H1 (cell line): ENCODE measurements at regions of chr19 and their contacts with region 1.

Region 1: GRCh38 chr19:45079063-45079910 is at the start of gene GEMIN7:
- DNase-seq: peak in 1 of 2 experiments; percentile 92
- H3K4me3 ChIP-seq: peak within 1 kb of the TSS; percentile 87 to 98 (median 94)
- H3K27ac ChIP-seq: peak within 1 kb of the TSS; percentile 94
- H3K4me1 ChIP-seq: peaks cover 13 to 37% (median 20%) of the 10 kb centered on the region in 4 experiments
- H3K27me3 ChIP-seq: no peaks in the 10 kb centered on the region
- CTCF ChIP-seq: peak in 2 of 3 experiments; percentile 6 to 34; a peak in 3 of 4 replicates
- EP300 ChIP-seq: peak in 1 of 2 experiments; percentile 93; a peak in 1 of 3 replicates
- POLR2A ChIP-seq: peak in 1 of 2 experiments; percentile 51; a peak in 1 of 3 replicates
- RAD21 ChIP-seq: no peak; a peak in 1 of 4 replicates
- total RNA-seq, gene GEMIN7: 48.0 and 48.5 TPM in 2 replicates

Region 2: DNA sequence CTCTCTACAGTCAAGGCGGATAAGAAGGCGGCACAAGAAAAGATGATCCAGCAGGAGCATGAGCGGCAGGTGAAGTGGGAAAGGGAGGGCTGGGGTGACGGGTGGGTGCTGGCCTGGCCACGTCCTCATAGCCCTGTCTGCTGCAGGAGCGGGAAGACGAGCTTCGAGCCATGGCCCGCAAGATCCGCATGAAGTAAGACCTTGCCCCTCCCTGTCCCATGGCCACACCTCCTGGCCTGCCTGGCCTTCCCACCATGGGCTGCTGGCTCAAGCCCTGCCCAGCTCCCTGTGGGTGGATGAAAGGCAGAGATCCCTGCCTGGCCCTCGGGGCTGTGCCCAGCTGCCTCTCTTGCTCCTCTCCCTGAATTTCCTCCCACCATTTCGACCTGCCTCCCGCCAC is 10.2 kb before region 1 on chr19:
- CTCF ChIA-PET with region 1: interaction called, 3 read pairs
- POLR2A ChIA-PET with region 1: interaction called, 61 read pairs
- DNase-seq: no peak
- H3K4me3 ChIP-seq: no peak overlapping the region
- H3K27ac ChIP-seq: peak overlapping the region; percentile 10; the same call in 1 of the 2 replicates
- H3K4me1 ChIP-seq: no peaks in the 10 kb centered on the region
- H3K27me3 ChIP-seq: no peaks in the 10 kb centered on the region
- CTCF ChIP-seq: no peak
- EP300 ChIP-seq: no peak
- POLR2A ChIP-seq: no peak
- RAD21 ChIP-seq: no peak

Region 3: DNA sequence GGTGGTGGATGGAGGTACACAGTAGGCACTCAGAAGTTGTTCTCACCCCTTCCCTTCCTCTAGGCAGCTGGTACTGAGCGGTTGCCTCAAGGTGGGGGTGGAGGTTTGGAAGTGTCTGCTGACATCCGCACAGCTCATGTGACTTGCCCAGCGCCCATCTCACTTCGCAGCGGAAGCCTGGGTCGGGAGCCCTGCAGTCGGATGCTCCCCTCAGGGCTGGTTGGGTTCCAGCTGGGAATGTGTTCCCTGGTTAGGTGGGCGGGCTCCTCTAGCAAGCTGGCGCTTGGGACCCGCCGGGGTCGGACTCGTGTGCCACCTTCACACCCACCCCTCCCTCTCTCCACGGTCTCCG is 23.8 kb after region 1 on chr19:
- CTCF ChIA-PET with region 1: interaction called, 3 read pairs
- POLR2A ChIA-PET with region 1: interaction called, 26 read pairs
- DNase-seq: no peak
- H3K4me3 ChIP-seq: no peak overlapping the region
- H3K27ac ChIP-seq: no peak overlapping the region
- H3K4me1 ChIP-seq: peaks cover 0 to 28% (median 11%) of the 10 kb centered on the region in 4 experiments; a peak in 6 of 7 replicates
- H3K27me3 ChIP-seq: no peaks in the 10 kb centered on the region
- CTCF ChIP-seq: no peak
- EP300 ChIP-seq: no peak
- POLR2A ChIP-seq: no peak
- RAD21 ChIP-seq: no peak

Region 4: DNA sequence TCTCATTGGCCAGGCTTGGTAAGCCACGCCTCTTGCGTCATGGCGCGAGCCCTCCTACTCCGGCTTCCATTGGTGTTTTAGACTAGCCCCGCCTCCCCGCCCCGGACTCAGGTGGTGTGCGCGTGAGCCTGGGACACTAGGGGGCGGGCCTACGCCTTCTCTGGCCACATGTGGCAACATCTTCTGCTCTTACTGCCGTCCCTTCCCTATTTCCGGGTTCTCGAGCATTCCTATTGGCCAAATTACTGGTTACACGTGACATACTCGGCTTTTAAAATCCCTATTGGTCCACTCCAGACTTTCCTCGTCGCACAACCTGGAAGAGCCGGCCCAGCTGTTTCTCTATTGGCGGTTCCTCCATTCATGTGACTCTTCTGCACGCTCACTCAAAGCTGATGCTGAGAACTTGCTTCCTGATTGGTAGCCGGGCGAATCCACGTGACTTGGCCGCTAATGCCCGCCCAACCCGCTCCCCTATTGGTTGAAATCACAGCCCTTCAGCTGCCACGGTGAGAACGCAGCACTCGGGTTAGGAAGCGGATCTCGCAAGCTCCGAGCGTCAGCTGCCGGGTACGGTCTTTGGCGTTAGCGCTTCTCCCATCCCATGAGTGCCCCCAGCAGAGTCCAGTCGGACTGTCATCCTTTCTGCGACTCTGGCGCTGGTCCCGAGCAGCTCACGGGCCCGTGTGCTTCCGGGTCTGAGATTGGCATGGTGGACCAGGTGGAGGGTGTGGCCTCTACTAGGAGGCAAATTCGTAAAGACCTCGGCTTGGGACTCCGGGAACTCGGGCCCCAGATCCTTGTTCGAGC is 99.2 kb after region 1 on chr19 and contains the start of gene BLOC1S3:
- CTCF ChIA-PET with region 1: no interaction called
- POLR2A ChIA-PET with region 1: interaction called, 11 read pairs
- DNase-seq: peak; percentile 98 to 99
- H3K4me3 ChIP-seq: peak within 1 kb of the TSS; percentile 79 to 97 (median 93)
- H3K27ac ChIP-seq: peak within 1 kb of the TSS; percentile 82
- H3K4me1 ChIP-seq: peaks cover 0 to 5% (median 0%) of the 10 kb centered on the region in 4 experiments; a peak in 5 of 7 replicates
- H3K27me3 ChIP-seq: no peaks in the 10 kb centered on the region
- CTCF ChIP-seq: peak; percentile 19 to 70 (median 63); a peak in 3 of 4 replicates
- EP300 ChIP-seq: no peak
- POLR2A ChIP-seq: no peak
- RAD21 ChIP-seq: no peak
- total RNA-seq, gene BLOC1S3: 6.0 and 8.0 TPM in 2 replicates